PC-3 (cell line): ENCODE measurements at regions of chr21 and their contacts with region 1.

Region 1: DNA sequence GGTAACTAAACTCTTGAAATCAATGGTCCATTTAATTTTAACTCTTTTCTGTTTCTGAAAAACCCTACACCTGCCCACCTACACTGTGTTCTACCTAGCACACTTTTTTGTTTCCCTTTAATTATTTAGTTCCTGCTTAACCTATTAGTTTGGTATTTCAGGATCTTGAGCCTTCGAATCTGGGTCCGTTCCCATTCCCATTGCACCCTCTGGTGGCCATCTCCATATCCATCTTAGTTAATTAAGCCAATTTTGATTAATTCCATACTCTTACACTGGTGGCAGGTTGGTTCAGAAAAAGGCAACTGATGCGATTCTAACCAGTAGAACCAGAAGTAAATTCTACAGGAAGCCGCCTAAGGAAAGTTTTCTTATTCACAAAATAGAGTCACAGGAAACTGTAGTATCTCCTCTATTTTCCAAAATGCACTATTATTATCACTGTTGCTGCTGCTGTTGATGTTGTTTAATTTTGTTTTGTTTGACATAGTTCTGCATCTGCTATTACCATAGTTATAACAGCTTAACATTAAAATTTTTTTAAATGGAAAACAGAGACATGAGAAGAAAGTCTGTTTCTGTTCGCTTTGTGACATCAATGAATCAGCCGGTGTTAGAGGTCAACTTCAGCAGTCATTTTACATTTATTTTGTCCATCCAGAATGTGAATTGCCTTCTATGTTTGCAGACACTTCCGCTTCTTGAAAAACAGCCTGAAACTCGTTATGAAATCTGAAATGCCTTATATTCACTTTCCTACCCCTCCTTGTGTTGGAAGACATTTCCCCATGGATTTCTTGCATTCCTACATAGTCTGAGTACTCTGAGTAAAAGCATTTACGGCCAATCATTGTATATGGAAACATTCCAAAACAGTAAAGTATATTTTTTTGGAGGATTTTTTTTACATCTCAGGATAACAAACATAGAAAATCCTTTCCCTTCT is 115.5 kb upstream of the NCAM2 start:
- DNase-seq: peak; percentile 64
- ATAC-seq: peak; percentile 48
- H3K4me3 ChIP-seq: no peak overlapping the region
- H3K27ac ChIP-seq: no peak overlapping the region
- H3K4me1 ChIP-seq: no peaks in the 10 kb centered on the region
- H3K27me3 ChIP-seq: no peaks in the 10 kb centered on the region
- CTCF ChIP-seq: peak; percentile 82

Region 2: DNA sequence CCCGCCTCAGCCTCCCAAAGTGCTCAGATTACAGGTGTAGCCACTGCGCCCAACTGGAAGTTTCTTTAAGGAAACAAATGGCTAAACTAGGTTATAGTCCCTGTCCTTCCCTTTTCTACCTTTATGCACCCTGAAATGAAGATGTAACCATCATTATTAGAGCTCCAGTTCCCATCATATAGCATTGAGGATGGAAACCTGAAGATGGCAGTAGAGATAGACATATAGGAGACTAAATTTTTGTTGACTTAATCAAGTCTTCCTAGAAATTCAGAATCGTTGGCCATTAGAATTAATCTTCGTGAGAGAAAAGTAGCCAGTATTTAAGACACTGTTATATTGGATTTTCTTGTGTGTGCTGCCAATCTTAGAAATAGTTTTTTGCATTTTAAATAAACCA is 900.8 kb before region 1 on chr21:
- CTCF ChIA-PET with region 1: interaction called, 5 read pairs
- POLR2A ChIA-PET with region 1: no interaction called
- intact Hi-C with region 1: loop called (anchors 5 kb)
- DNase-seq: peak; percentile 42
- ATAC-seq: peak; percentile 43; the same call in 1 of the 2 replicates
- H3K4me3 ChIP-seq: no peak overlapping the region
- H3K27ac ChIP-seq: no peak overlapping the region
- H3K4me1 ChIP-seq: no peaks in the 10 kb centered on the region
- H3K27me3 ChIP-seq: no peaks in the 10 kb centered on the region
- CTCF ChIP-seq: peak; percentile 48

Region 3: GRCh38 chr21:20570824-20571232 is 311.9 kb before region 1 on chr21:
- CTCF ChIA-PET with region 1: no interaction called
- POLR2A ChIA-PET with region 1: no interaction called
- intact Hi-C with region 1: no loop called
- DNase-seq: peak; percentile 22
- ATAC-seq: no peak
- H3K4me3 ChIP-seq: no peak overlapping the region
- H3K27ac ChIP-seq: no peak overlapping the region
- H3K4me1 ChIP-seq: no peaks in the 10 kb centered on the region
- H3K27me3 ChIP-seq: no peaks in the 10 kb centered on the region
- CTCF ChIP-seq: no peak

Region 4: GRCh38 chr21:20822666-20823065 is 60.1 kb before region 1 on chr21:
- CTCF ChIA-PET with region 1: no interaction called
- POLR2A ChIA-PET with region 1: no interaction called
- intact Hi-C with region 1: no loop called
- DNase-seq: no peak
- ATAC-seq: no peak
- H3K4me3 ChIP-seq: no peak overlapping the region
- H3K27ac ChIP-seq: no peak overlapping the region
- H3K4me1 ChIP-seq: no peaks in the 10 kb centered on the region
- H3K27me3 ChIP-seq: no peaks in the 10 kb centered on the region
- CTCF ChIP-seq: no peak

Region 5: GRCh38 chr21:21064353-21064752 is 181.6 kb after region 1 on chr21:
- CTCF ChIA-PET with region 1: no interaction called
- POLR2A ChIA-PET with region 1: no interaction called
- intact Hi-C with region 1: no loop called
- DNase-seq: no peak
- ATAC-seq: no peak
- H3K4me3 ChIP-seq: no peak overlapping the region
- H3K27ac ChIP-seq: no peak overlapping the region
- H3K4me1 ChIP-seq: no peaks in the 10 kb centered on the region
- H3K27me3 ChIP-seq: no peaks in the 10 kb centered on the region
- CTCF ChIP-seq: no peak